ENCODE measurements at regions of chr4 and their contacts with region 1.

Region 1: DNA sequence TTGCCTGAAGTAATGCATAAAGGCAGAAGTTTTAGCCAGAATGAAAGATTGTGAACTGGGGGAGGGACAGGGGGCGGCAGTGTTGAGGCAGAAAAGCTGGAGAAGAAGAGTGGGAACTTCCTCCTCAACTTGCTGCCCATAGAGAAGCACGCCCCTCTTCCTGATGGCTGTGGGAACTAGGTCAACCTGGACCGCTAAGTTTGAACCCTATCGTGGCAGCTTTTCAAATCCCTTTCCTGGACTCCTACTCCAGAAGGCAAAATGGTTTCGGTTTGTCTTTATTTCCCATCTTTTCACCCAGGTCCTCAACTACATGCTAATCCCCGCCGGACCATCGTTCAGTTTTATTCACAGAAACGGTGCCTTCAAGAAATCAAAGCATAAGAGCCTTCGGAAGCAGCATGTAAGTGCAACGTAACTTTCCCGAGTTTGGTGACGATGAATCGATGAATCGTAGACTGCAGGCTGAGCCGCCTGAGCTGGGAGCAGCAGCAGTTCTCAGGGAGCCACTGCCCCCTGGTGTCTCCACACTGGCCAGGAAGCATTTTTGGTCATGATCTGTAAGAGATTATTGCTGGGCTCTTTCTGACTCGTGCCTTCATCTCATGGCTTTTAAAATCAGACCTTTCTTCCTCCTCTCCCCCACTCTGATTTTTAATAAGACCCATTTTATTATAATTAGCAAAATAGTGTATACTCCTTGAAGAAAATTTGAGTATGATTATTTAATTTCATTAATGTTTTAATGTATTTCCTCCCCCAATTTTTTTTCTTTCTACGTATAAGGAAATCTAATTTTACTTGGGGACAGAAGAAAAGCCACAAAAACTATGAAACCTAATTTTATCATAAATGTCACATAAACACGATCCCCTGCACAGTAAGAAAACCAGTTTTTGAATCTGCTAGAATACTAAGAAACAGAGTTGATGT is 21.4 kb downstream of the SPINK2 start:
- DNase-seq: peak; percentile 93
- ATAC-seq: peak; percentile 95
- H3K4me3 Mint-ChIP-seq: peak overlapping the region; percentile 85
- H3K27ac Mint-ChIP-seq: peak overlapping the region; percentile 85
- H3K4me1 Mint-ChIP-seq: peaks cover 33% of the 10 kb centered on the region
- H3K27me3 Mint-ChIP-seq: no peaks in the 10 kb centered on the region

Region 2: DNA sequence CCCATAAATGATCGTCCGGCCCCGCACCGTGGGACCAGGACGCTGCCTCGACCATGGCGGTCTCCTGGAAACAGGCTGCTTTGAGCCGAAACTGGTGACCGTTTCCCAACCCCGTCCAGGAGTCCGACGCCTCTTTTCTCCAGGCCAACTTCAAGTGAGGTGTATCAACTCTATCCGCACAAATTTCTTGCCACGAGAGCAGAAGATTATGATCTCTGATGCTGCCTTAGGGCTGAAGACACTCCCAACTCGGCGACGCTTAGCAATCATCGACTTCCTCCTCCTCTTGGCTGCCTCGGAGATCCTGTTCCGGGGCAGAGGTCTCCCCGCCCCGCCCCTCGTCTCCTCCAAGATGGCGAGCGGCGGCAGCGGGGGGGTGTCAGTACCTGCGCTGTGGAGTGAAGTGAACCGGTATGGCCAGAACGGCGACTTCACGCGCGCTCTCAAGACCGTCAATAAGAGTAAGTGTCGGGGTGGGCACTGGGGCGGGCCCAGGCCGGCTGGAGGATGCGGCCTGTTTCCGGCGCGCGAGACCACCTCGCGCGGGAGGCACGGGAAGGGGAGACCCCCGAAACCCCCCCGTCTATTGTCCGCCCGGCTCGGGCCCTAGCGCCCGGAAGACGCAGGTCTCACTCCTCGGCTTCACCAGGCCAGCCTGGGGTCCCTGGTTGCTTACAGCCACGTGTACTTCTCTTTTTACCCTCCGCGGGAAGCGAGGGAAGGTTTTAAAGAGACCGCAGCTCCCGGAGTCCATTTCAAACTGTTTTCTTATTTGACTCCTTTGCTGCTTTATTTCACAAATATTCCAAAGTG is 332.6 kb before region 1 on chr4 and contains the start of gene SRP72:
- CTCF ChIA-PET with region 1: interaction called, 4 read pairs
- POLR2A ChIA-PET with region 1: no interaction called
- intact Hi-C with region 1: loop called in 1 of 2 experiments (anchors 2 kb)
- DNase-seq: peak; percentile 94
- ATAC-seq: peak; percentile 92
- H3K4me3 Mint-ChIP-seq: peak within 1 kb of the TSS; percentile 100
- H3K27ac Mint-ChIP-seq: peak within 1 kb of the TSS; percentile 99
- H3K4me1 Mint-ChIP-seq: peaks cover 50% of the 10 kb centered on the region
- H3K27me3 Mint-ChIP-seq: no peaks in the 10 kb centered on the region
- total RNA-seq, gene SRP72: 181 to 204 TPM

Region 3: GRCh38 chr4:56587091-56587490 is 213.0 kb before region 1 on chr4:
- CTCF ChIA-PET with region 1: no interaction called
- POLR2A ChIA-PET with region 1: no interaction called
- intact Hi-C with region 1: no loop called
- DNase-seq: no peak
- ATAC-seq: no peak
- H3K4me3 Mint-ChIP-seq: no peak overlapping the region
- H3K27ac Mint-ChIP-seq: no peak overlapping the region
- H3K4me1 Mint-ChIP-seq: no peaks in the 10 kb centered on the region
- H3K27me3 Mint-ChIP-seq: no peaks in the 10 kb centered on the region

Region 4: DNA sequence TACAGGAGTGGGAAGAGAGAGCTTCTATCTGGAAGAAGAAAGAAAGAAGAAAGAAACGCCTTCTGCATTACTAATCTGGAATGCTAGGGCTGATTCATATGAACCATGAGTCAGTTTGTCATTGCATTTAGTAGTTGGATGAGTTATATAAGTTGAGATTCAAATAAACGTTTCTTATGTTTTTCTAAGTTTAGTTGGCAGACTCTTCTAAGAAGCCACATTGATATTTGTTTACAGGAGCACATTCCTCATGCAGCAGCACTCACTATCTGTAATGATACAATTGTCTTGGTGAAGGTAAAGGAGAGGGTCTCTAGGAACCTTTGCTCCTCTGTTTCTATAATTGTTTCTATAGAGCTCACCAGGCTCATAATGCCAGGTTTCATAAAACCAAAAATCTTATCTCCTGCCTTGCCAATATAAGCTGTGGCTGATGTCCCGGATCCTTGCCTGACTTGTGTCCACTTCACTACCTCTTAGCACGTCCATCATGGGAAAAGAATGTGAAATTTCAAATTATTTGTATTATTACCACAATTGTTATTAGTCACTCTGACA is 158.5 kb before region 1 on chr4:
- CTCF ChIA-PET with region 1: interaction called, 12 read pairs
- POLR2A ChIA-PET with region 1: no interaction called
- intact Hi-C with region 1: no loop called
- DNase-seq: no peak
- ATAC-seq: peak; percentile 80
- H3K4me3 Mint-ChIP-seq: no peak overlapping the region
- H3K27ac Mint-ChIP-seq: peak overlapping the region; percentile 82
- H3K4me1 Mint-ChIP-seq: peaks cover 36% of the 10 kb centered on the region
- H3K27me3 Mint-ChIP-seq: no peaks in the 10 kb centered on the region

Region 5: DNA sequence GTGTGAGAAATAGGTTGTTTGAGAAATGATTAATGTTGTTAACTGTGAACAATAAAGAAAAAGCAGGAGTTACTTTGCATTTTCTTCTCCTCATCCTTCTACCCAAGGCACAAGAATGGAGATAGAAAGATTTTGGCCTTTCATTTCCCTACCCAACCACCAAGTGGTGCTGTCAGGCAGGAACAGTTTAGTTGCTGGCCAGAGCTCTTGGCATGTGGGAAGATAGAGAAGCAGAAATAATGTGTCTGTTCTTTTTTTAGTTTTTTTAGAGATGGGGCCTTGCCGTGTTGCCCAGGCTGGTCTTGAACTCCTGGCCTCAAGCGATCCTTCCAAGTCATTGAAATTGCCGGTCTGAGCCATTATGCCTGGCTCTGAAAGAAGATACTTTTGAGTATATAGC is 131.8 kb before region 1 on chr4:
- CTCF ChIA-PET with region 1: interaction called, 11 read pairs
- POLR2A ChIA-PET with region 1: interaction called, 3 read pairs
- intact Hi-C with region 1: loop called (anchors 1 kb)
- DNase-seq: peak; percentile 50
- ATAC-seq: peak; percentile 58
- H3K4me3 Mint-ChIP-seq: no peak overlapping the region
- H3K27ac Mint-ChIP-seq: no peak overlapping the region
- H3K4me1 Mint-ChIP-seq: no peaks in the 10 kb centered on the region
- H3K27me3 Mint-ChIP-seq: peaks cover 9% of the 10 kb centered on the region

Region 6: DNA sequence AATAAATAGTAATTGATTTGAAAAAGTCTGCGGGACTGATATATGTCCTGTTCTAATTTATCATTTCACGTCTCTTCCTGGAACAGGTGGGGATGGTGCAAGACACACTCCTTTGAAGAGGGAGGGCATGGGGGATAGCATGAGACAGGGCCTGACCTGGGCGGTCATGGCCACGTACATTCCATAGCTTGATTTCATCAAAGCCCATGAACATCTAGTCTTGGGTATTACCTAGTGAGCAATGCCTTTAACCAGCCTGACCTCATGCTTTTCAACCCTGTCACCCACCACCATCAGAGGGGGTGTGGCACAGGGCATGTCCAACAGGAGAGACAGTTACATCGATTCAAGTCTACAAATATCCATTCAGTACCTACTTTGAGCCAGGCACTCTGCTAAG is 66.7 kb before region 1 on chr4:
- CTCF ChIA-PET with region 1: interaction called, 4 read pairs
- POLR2A ChIA-PET with region 1: interaction called, 11 read pairs
- intact Hi-C with region 1: no loop called
- DNase-seq: no peak
- ATAC-seq: no peak
- H3K4me3 Mint-ChIP-seq: no peak overlapping the region
- H3K27ac Mint-ChIP-seq: no peak overlapping the region
- H3K4me1 Mint-ChIP-seq: peaks cover 3% of the 10 kb centered on the region
- H3K27me3 Mint-ChIP-seq: no peaks in the 10 kb centered on the region

Region 7: GRCh38 chr4:56828784-56829535 is 28.9 kb after region 1 on chr4:
- CTCF ChIA-PET with region 1: no interaction called
- POLR2A ChIA-PET with region 1: no interaction called
- intact Hi-C with region 1: loop called (anchors 1 to 2 kb)
- DNase-seq: no peak
- ATAC-seq: peak; percentile 24
- H3K4me3 Mint-ChIP-seq: no peak overlapping the region
- H3K27ac Mint-ChIP-seq: no peak overlapping the region
- H3K4me1 Mint-ChIP-seq: peaks cover 18% of the 10 kb centered on the region
- H3K27me3 Mint-ChIP-seq: no peaks in the 10 kb centered on the region

Measured in activated CD4-positive, alpha-beta T cell treated with anti-CD3 and anti-CD28 coated beads for 36 hours (primary cell).